Activated CD8-positive, alpha-beta memory T cell treated with anti-CD3 and anti-CD28 coated beads, Interleukin-2, amount 10 ng/mL, durations not matched to agents 7 days and 5 days (primary cell): ENCODE measurements at regions of chr3 and their contacts with region 1.

Region 1: GRCh38 chr3:49673715-49674496 is at the start of gene APEH:
- DNase-seq: peak; percentile 99
- ATAC-seq: peak; percentile 87
- H3K4me3 Mint-ChIP-seq: peak within 1 kb of the TSS; percentile 96
- H3K27ac Mint-ChIP-seq: peak within 1 kb of the TSS; percentile 99
- H3K4me1 Mint-ChIP-seq: peaks cover 34% of the 10 kb centered on the region
- H3K27me3 Mint-ChIP-seq: no peaks in the 10 kb centered on the region
- total RNA-seq, gene APEH: 150 to 172 TPM

Region 2: GRCh38 chr3:49534581-49535441 is 139.1 kb before region 1 on chr3:
- CTCF ChIA-PET with region 1: interaction called, 272 read pairs
- DNase-seq: no peak
- ATAC-seq: no peak
- H3K4me3 Mint-ChIP-seq: no peak overlapping the region
- H3K27ac Mint-ChIP-seq: no peak overlapping the region
- H3K4me1 Mint-ChIP-seq: peaks cover 3% of the 10 kb centered on the region
- H3K27me3 Mint-ChIP-seq: no peaks in the 10 kb centered on the region

Region 3: DNA sequence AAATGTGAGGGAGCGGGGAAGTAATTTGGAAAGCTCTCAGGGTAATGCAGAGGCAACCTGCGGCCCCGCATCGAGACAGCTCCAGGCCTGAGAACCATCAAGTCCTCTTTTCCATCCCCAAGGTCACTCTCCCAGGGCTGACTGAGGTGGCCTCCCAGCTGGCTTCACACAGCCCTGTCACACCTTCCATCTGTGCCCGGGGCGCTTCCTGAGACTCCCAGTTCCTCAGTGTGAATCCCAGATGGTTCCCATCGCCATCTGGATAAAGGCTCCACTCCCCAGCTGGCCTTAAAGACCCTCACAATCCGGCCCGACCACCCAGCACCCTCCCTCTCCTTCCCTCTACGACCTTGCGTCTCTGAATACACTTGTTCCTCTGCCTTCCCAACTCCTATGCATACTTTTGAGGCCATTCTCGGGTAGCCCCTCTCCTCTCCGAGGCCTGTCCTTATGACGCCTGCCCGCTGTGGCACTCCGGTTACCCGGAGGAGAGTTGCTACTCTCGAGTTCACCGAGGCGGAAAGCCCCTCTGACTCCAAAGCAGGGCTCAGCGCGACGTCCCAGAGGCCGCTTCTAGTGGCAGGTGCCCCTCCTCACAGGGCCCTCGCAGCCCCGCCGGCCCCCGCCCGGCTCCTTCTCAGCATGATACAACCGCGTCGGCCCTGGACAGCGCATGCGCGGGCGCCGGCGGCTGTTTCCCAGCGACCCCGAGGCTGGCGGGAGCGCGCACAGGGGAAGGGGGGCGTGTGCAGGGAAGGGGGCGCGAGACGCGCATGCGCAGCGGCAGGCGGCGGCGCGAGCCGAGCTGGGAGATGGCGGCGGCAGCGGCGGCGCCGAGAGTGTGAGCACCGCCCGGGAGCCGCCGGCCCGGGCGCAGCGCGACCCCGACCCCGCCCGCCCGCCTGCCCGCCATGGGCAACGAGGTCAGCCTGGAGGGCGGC is 119.9 kb before region 1 on chr3 and contains the start of gene BSN:
- CTCF ChIA-PET with region 1: interaction called, 14 read pairs
- DNase-seq: peak; percentile 92
- ATAC-seq: peak; percentile 92
- H3K4me3 Mint-ChIP-seq: peak within 1 kb of the TSS; percentile 82
- H3K27ac Mint-ChIP-seq: peak within 1 kb of the TSS; percentile 50
- H3K4me1 Mint-ChIP-seq: peaks cover 31% of the 10 kb centered on the region
- H3K27me3 Mint-ChIP-seq: peaks cover 41% of the 10 kb centered on the region
- total RNA-seq, gene BSN: 0.12 TPM